MCF 10A (cell line): ENCODE measurements at regions of chr6 and their contacts with region 1.

Region 1: DNA sequence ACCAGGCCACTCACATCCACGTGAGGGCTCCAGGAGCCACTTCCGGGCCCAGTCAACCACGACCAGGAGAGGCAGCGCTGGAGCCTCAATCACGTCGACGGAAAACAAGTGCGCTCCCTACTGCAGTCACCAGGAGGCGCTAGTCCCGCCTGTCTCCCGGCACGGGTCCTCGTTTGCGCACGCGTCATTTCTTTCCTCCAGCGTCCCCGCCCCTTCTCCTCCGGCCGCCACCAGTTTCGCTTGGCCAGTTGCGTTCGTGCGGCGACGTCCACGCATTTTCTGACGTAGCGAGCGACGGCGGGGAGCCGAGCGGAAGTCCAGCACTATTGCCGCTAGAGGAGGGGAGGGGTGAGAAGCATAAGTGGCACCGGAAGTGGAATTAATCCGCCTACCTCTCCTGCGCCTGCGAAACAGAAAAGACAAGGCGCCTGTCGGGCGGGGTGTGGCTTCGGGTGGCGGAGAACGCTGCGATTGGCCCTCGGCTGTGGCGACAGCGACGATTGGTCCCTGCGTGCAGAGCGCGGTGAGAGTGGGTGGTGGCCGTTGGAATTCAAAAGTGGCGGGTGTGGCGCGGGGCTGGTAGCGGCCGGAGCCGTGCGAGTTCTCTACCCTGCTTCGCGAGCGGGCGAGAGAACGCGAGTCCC is at the start of gene KIFC1:
- DNase-seq: peak; percentile 99
- H3K4me3 Mint-ChIP-seq: peak within 1 kb of the TSS; percentile 81
- H3K27ac Mint-ChIP-seq: peak within 1 kb of the TSS; percentile 72
- H3K4me1 Mint-ChIP-seq: peaks cover 37% of the 10 kb centered on the region
- H3K27me3 Mint-ChIP-seq: no peaks in the 10 kb centered on the region
- CTCF ChIP-seq: peak; percentile 89
- total RNA-seq, gene KIFC1: 20.3 and 27.1 TPM in 2 replicates

Region 2: DNA sequence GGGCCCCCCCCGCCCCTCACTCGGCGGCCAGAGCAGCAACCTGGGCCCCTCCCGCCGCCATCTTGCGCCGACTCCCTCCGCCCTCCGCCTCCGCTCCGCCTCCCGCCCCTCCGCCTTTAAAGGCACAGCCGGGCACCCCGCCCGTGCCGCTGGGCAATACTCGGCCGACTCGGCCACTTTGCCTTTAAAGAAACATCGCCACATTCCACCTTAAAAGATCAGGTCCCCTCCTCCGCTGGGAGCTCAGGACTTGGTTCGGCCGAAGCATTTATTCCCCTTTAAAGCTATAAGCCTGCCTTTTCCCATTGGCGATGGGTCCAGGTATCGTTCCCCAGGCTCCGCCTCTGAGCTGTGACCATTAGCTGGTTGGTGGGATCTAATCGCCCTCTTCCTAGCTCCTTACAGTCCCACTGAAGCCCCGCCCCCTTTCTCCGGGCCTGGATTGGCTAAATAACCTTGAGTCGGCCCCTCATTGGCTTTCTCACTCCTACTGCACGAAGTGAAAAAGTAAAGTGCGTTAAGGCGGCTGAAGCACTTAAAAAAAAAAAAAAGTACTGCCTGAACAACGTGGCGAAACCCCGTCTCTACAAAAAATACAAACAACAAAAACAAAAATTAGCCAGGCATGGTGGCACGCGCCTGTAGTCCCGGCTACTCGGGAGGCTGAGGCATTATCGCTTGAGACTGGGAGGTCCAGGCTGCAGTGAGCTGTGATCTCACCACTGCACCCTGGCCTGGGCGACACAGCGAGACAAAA is 73.6 kb before region 1 on chr6 and contains the start of gene ZBTB22:
- CTCF ChIA-PET with region 1: interaction called, 5 read pairs
- POLR2A ChIA-PET with region 1: interaction called, 11 read pairs
- intact Hi-C with region 1: no loop called
- DNase-seq: peak; percentile 100
- H3K4me3 Mint-ChIP-seq: peak within 1 kb of the TSS; percentile 81
- H3K27ac Mint-ChIP-seq: peak within 1 kb of the TSS; percentile 80
- H3K4me1 Mint-ChIP-seq: peaks cover 66% of the 10 kb centered on the region
- H3K27me3 Mint-ChIP-seq: no peaks in the 10 kb centered on the region
- CTCF ChIP-seq: no peak
- total RNA-seq, gene ZBTB22: 12.3 and 15.5 TPM in 2 replicates

Region 3: DNA sequence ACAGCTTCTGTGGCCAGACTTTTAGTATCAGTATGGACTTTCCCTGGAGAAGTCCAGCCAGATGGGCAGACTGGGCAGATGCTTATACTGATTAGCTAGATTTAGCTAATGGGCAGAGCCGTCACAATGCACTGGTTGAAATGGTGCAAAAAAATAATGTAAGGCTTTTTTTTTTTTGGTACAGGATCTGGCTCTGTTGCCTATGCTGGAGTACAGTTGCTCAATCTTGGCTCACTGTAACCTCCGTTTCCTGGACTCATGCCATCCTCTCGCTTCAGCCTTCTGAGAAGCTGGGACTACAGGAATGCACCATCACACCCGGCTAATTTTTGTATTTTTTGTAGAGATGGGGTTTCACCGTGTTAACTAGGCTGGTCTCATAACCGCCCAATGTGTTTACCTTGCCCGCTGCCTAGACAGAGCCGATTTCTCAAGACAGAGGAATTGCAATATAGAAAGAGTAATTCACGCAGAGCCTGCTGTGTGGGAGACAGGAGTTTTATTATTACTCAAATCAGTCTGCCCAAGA is 16.2 kb before region 1 on chr6:
- CTCF ChIA-PET with region 1: interaction called, 14 read pairs
- POLR2A ChIA-PET with region 1: interaction called, 16 read pairs
- intact Hi-C with region 1: no loop called
- DNase-seq: peak; percentile 96
- H3K4me3 Mint-ChIP-seq: peak overlapping the region; percentile 56
- H3K27ac Mint-ChIP-seq: peak overlapping the region; percentile 71
- H3K4me1 Mint-ChIP-seq: peaks cover 16% of the 10 kb centered on the region
- H3K27me3 Mint-ChIP-seq: no peaks in the 10 kb centered on the region
- CTCF ChIP-seq: no peak